Sigmoid colon (tissue), 7 donors: ENCODE measurements at regions of chr3 and their contacts with region 1.

Region 1: GRCh38 chr3:39383045-39383880 is at the start of gene SLC25A38:
- DNase-seq: peak; percentile 91
- H3K4me3 ChIP-seq: peak within 1 kb of the TSS; percentile 62 to 90 (median 74)
- H3K27ac ChIP-seq: peak within 1 kb of the TSS; percentile 91 to 98 (median 94)
- H3K4me1 ChIP-seq: peaks cover 0 to 24% (median 21%) of the 10 kb centered on the region in 4 donors
- H3K27me3 ChIP-seq: no peaks in the 10 kb centered on the region
- CTCF ChIP-seq: peak in 2 of 4 experiments; percentile 26 to 33
- EP300 ChIP-seq: no peak
- POLR2A ChIP-seq: peak; percentile 11 to 59
- total RNA-seq, gene SLC25A38: 25.8 to 32.6 (median 27.5) TPM

Region 2: GRCh38 chr3:37779289-37780152 is 1603.7 kb before region 1 on chr3:
- intact Hi-C with region 1: loop called (anchors 10 kb)
- DNase-seq: no peak
- H3K4me3 ChIP-seq: no peak overlapping the region
- H3K27ac ChIP-seq: no peak overlapping the region
- H3K4me1 ChIP-seq: peaks cover 0 to 7% (median 6%) of the 10 kb centered on the region in 4 donors
- H3K27me3 ChIP-seq: no peaks in the 10 kb centered on the region
- CTCF ChIP-seq: peak; percentile 60 to 81 (median 75)
- EP300 ChIP-seq: no peak
- POLR2A ChIP-seq: no peak

Region 3: DNA sequence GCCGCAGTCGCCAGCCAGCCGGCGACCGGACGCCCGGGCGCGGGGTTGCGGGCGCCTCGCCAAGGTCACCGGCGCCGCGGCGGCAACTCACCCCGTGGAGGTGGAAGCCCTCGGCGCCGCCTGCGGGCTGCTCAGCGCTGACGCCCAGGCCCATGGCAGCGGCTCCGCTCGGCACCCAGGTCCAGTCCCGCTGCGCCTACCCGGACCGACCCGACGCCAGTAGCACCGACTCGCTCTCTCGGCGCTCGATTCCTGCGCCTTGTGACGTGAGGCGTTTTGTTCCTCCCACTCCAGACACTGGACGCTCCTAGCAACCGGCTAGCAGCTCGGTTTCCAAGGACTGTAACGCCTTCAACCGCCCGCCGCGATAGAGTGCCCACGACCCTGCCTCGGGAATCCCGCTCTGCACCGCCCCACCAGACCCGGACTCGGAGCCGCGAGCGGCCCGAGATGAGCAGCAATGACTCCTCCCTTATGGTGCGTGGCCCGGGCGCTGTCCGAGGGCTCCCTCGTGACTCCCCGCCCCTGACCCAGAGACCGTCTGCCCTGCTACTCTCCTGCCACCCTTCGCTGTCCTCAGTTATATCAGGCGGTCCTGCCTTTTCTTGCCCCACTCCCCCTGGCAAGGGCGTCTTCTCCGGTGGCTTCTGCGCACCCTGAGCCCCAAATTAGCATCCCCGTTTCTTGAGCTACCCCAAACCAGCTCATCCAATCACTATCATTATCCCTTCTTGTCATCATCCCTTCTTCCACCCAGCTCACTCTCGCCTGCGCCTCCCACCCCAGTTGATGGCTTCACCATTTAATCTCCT is 275.7 kb before region 1 on chr3 and contains the starts of genes GORASP1 and TTC21A:
- intact Hi-C with region 1: loop called (anchors 1 kb)
- DNase-seq: peak; percentile 96
- H3K4me3 ChIP-seq: peak within 1 kb of the TSS; percentile 75 to 98 (median 82)
- H3K27ac ChIP-seq: peak within 1 kb of the TSS; percentile 90 to 97 (median 94)
- H3K4me1 ChIP-seq: peaks cover 0 to 53% (median 43%) of the 10 kb centered on the region in 4 donors
- H3K27me3 ChIP-seq: no peaks in the 10 kb centered on the region
- CTCF ChIP-seq: no peak
- EP300 ChIP-seq: no peak
- POLR2A ChIP-seq: peak; percentile 50 to 62
- total RNA-seq, gene GORASP1: 43.5 to 49.9 (median 48.9) TPM
- total RNA-seq, gene TTC21A: 2.9 to 7.1 (median 4.4) TPM

Region 4: GRCh38 chr3:39180546-39181346 is 202.5 kb before region 1 on chr3:
- intact Hi-C with region 1: loop called (anchors 5 kb)
- DNase-seq: peak; percentile 96
- H3K4me3 ChIP-seq: peak overlapping the region; percentile 3 to 47 (median 44)
- H3K27ac ChIP-seq: peak overlapping the region; percentile 87 to 95 (median 92)
- H3K4me1 ChIP-seq: peaks cover 0 to 63% (median 36%) of the 10 kb centered on the region in 4 donors
- H3K27me3 ChIP-seq: no peaks in the 10 kb centered on the region
- CTCF ChIP-seq: peak in 1 of 4 experiments; percentile 25
- EP300 ChIP-seq: peak in 1 of 4 donors; percentile 80
- POLR2A ChIP-seq: peak in 1 of 2 donors; percentile 12

Region 5: DNA sequence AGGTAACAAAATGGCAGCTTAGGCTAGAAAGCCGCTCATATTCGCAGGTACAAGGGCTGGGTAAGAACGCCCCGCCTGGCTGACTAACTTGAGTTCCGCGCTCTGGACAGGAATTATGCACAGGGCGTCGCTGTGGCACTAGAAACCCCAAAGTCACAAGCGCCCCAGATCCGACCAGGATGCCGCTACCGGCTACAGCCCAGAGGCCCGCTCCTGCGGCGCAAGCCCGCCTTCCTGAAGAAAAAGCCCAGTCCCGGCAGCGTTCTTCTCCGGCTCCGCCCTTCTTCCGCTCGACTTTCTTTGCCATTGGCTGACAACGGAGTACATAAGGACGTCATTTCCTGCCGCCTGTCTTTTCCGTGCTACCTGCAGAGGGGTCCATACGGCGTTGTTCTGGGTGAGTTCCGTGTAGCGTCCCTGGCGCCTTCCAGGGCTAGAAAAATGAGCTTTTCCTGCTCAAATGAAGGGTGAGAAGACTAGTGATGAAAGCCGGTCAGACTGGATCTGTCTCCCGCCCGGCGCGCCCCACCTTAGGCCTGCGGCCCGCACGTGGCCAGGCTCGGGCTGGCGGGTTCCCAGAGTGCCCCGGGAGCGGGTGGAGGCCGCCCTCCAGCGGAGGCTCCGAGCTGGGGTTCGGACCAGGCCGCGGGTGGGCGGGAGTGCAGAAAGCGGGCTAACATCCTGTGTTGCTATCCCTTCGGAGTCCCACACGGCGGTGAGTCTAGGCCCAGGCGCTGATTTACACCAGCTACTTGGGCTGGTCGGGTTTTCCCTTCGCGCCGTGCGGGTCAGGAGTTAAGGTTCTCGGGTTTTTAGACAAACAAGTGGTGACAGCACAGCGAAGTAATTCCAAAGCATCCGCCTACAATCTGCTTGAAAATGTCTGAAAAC is 23.4 kb after region 1 on chr3 and contains the start of gene RPSA:
- intact Hi-C with region 1: loop called (anchors 1 kb)
- DNase-seq: peak; percentile 98
- H3K4me3 ChIP-seq: peak within 1 kb of the TSS; percentile 63 to 83 (median 69)
- H3K27ac ChIP-seq: peak within 1 kb of the TSS; percentile 78 to 85 (median 81)
- H3K4me1 ChIP-seq: peaks cover 0 to 26% (median 16%) of the 10 kb centered on the region in 4 donors
- H3K27me3 ChIP-seq: no peaks in the 10 kb centered on the region
- CTCF ChIP-seq: peak in 3 of 4 experiments; percentile 13 to 36 (median 27)
- EP300 ChIP-seq: no peak
- POLR2A ChIP-seq: peak; percentile 95 to 96
- total RNA-seq, gene RPSA: 1,024 to 1,538 (median 1,324) TPM

Region 6: DNA sequence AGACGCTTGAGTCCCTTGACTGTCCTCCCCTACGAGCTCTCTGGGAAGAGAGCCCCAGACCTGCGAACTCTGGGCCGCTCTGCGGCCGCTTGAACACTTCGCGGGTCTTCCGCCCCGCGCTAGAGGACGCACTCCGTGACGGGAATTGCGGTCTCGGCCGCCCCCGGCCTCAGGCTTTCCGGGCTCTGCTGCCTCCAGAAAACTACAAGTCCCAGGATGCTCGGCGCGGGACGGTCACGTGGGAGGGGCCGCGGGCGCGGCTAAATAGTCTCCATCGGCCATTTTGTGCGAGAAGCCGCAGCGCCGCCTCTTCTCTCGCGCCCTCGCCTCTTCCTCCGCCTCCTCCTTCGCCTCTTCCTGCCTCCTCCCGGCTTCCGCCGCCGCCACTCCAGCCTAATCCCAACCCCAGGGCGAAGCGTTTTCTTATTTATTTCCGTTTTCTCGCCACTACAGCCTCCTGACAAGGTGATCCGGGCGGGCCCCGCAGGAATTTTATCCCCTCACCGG is 926.2 kb after region 1 on chr3 and contains the start of gene EIF1B:
- intact Hi-C with region 1: loop called (anchors 5 kb)
- DNase-seq: peak; percentile 99
- H3K4me3 ChIP-seq: peak within 1 kb of the TSS; percentile 75 to 95 (median 90)
- H3K27ac ChIP-seq: peak within 1 kb of the TSS; percentile 90 to 99 (median 98)
- H3K4me1 ChIP-seq: peaks cover 0 to 34% (median 29%) of the 10 kb centered on the region in 4 donors
- H3K27me3 ChIP-seq: no peaks in the 10 kb centered on the region
- CTCF ChIP-seq: peak; percentile 61 to 84 (median 76)
- EP300 ChIP-seq: peak in 1 of 4 donors; percentile 30
- POLR2A ChIP-seq: peak; percentile 76 to 92
- total RNA-seq, gene EIF1B: 27.1 to 42.8 (median 39.5) TPM